WTC11 (cell line): ENCODE measurements at regions of chr1 and their contacts with region 1.

Region 1: DNA sequence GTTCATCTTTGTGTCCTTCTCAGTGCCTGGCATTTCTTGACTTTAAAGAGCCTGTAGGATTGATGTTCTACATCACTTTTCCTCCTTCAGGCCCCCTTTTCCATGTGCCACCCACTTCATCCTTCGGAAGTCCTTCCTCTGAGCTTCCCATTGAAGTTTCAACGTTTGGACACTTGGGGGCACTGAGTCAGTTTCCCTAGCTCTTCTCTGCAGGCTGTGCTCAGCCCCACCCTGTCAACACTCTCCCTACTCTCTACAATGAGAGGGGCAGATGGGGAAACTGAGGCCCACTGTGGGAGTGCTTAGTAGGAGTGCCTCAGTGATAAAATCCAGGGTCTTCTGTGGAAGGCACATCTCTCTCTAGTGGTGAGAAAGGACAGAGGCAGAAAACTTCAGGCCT is 11.9 kb downstream of the KCNJ10 start:
- DNase-seq: no peak
- ATAC-seq: peak; percentile 53
- H3K4me3 Mint-ChIP-seq: no peak overlapping the region
- H3K27ac Mint-ChIP-seq: no peak overlapping the region
- H3K4me1 Mint-ChIP-seq: peaks cover 18% of the 10 kb centered on the region
- H3K27me3 Mint-ChIP-seq: peaks cover 7% of the 10 kb centered on the region
- CTCF ChIP-seq: no peak

Region 2: GRCh38 chr1:160046494-160047110 is 11.5 kb before region 1 on chr1:
- CTCF ChIA-PET with region 1: interaction called, 978 read pairs
- POLR2A ChIA-PET with region 1: no interaction called
- DNase-seq: peak; percentile 61
- ATAC-seq: peak; percentile 88
- H3K4me3 Mint-ChIP-seq: peak overlapping the region; percentile 26; the same call in 1 of the 2 replicates
- H3K27ac Mint-ChIP-seq: no peak overlapping the region
- H3K4me1 Mint-ChIP-seq: peaks cover 30% of the 10 kb centered on the region
- H3K27me3 Mint-ChIP-seq: peaks cover 7% of the 10 kb centered on the region
- CTCF ChIP-seq: peak; percentile 57; the same call in 1 of the 2 replicates